ENCODE measurements at regions of chr5 and their contacts with region 1.

Region 1: GRCh38 chr5:32489791-32490582 is 45.4 kb upstream of the ZFR start:
- DNase-seq: peak; percentile 69 to 81 (median 74)
- ATAC-seq: peak; percentile 78 to 93 (median 92)
- H3K4me3 ChIP-seq: no peak overlapping the region
- H3K27ac ChIP-seq: no peak overlapping the region
- H3K4me1 ChIP-seq: peaks cover 0 to 4% (median 1%) of the 10 kb centered on the region in 4 donors
- H3K27me3 ChIP-seq: no peaks in the 10 kb centered on the region
- CTCF ChIP-seq: peak; percentile 68 to 78 (median 74)
- POLR2A ChIP-seq: no peak

Region 2: DNA sequence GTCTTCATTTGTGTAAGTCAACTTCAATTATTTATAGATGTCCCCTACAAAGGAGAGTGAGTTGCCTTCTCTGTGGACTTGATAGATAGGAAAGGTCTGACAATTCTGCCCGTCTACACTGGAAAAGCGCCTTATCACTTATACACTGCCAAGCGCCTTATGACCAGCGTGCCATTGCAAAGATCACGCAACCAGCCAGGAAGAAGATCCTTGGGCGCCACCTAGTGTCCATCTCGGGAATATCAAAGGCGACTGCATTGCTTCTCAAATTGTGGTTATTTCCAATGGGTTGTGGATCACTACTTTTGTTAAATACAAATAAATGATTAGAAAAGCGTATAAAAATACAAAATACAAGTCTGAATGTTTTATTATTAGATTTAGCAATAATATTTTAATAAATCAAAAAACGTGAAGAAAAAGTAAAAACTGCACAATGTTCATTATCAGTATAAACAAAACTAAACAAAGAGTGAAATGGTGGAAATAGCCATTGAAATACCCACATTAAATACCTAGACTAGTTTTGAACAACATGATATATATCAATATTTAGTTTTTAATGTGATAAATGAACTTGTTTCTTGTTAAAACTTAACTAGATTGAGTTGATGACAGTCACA is 123.2 kb after region 1 on chr5:
- intact Hi-C with region 1: loop called (anchors 10 kb)
- DNase-seq: peak; percentile 73 to 83 (median 79)
- ATAC-seq: peak; percentile 95 to 98 (median 96)
- H3K4me3 ChIP-seq: no peak overlapping the region
- H3K27ac ChIP-seq: no peak overlapping the region
- H3K4me1 ChIP-seq: no peaks in the 10 kb centered on the region
- H3K27me3 ChIP-seq: no peaks in the 10 kb centered on the region
- CTCF ChIP-seq: peak; percentile 85 to 97 (median 91)
- POLR2A ChIP-seq: no peak

Measured in right lobe of liver (tissue), 6 donors.